HepG2 (cell line): ENCODE measurements at regions of chr22 and their contacts with region 1.

Region 1: DNA sequence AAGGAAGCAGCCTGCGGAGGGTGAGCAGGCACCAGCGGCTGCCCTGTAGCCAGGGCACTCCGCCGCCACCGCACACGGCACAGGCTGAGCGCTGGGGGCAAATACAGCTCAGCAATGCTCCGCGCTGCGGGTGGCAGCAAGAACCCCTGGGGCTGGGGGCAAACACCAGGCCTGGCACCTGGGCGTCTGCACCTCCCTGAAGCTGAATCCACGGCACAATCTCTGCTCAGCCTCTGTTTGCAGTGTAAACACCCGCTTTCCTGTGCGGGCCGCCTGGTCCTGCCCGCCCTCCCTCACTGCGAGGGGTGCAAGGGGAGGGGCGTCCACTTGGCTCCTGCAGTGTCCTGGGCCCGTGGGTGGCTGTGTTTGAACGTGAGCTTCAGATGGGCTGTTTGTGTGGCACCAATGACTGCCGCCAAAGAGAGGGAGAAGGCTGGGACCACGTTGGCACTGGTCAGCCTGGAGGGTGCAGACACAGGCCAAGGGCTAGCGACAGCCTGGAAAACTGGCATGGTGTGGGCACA is 14.8 kb upstream of the MPPED1 start:
- DNase-seq: peak; percentile 57
- ATAC-seq: peak; percentile 59
- H3K4me3 ChIP-seq: peak overlapping the region; percentile 19 to 67 (median 48); a peak in 4 of 6 replicates
- H3K27ac ChIP-seq: no peak overlapping the region
- H3K4me1 ChIP-seq: peaks cover 99% of the 10 kb centered on the region
- H3K27me3 ChIP-seq: peaks cover 0 to 3% of the 10 kb centered on the region in 2 experiments; a peak in 1 of 5 replicates
- CTCF ChIP-seq: no peak
- EP300 ChIP-seq: no peak
- POLR2A ChIP-seq: no peak
- RAD21 ChIP-seq: no peak

Region 2: DNA sequence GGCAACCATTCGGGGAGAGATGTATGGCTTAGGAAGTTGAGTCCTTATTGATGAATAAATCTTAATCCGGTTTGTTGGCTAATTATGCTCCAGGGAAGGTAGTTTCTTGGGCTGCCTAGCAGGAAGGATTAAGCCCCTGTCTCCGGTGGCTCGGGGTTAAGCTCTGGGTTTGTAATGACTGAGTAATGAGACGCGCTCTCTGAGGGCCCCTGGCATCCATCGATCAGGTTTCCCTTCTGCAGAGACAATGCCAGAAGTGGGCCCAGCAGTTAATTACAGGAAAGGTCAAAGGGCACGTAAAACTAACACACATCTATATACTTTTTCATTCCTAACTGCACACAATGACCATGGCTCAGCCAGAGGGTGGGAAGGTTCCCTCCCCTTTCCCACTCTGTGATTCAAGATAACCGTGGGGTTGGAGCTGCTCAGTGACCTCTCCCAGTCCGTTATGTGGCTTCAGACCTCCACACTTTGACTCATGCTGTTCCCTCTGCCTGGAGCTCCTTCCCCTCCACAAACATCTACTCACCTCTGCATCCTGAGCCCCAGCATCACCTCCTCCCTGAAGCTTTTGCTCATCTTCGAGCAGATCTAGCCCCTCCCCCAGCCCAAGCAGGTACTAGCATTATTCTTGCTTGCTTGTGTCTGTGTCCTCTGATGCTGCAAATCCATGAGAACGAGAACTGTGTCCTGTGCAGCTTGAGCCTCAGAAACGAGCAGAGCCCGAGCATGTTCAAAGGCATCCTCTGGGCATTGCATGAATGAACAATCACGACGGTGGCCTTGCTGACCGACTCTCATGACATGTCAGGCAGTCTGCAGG is 70.5 kb before region 1 on chr22:
- CTCF ChIA-PET with region 1: no interaction called
- POLR2A ChIA-PET with region 1: no interaction called
- in situ Hi-C with region 1: no loop called
- intact Hi-C with region 1: no loop called
- DNase-seq: no peak
- ATAC-seq: no peak
- H3K4me3 ChIP-seq: no peak overlapping the region
- H3K27ac ChIP-seq: no peak overlapping the region
- H3K4me1 ChIP-seq: peaks cover 6% of the 10 kb centered on the region; the same call in 1 of the 2 replicates
- H3K27me3 ChIP-seq: peaks cover 1 to 42% of the 10 kb centered on the region in 2 experiments; a peak in 3 of 5 replicates
- CTCF ChIP-seq: no peak
- EP300 ChIP-seq: no peak
- POLR2A ChIP-seq: no peak
- RAD21 ChIP-seq: no peak

Region 3: GRCh38 chr22:43407591-43407990 is 10.6 kb after region 1 on chr22:
- CTCF ChIA-PET with region 1: no interaction called
- POLR2A ChIA-PET with region 1: interaction called, 17 read pairs
- in situ Hi-C with region 1: no loop called
- intact Hi-C with region 1: no loop called
- DNase-seq: no peak
- ATAC-seq: peak; percentile 9; the same call in 1 of the 3 replicates
- H3K4me3 ChIP-seq: peak overlapping the region in 1 of 3 experiments; percentile 26; a peak in 1 of 6 replicates
- H3K27ac ChIP-seq: no peak overlapping the region
- H3K4me1 ChIP-seq: peaks cover 40% of the 10 kb centered on the region
- H3K27me3 ChIP-seq: peaks cover 0 to 2% of the 10 kb centered on the region in 2 experiments; a peak in 1 of 5 replicates
- CTCF ChIP-seq: no peak
- EP300 ChIP-seq: no peak
- POLR2A ChIP-seq: no peak
- RAD21 ChIP-seq: no peak